Panc1 (cell line): ENCODE measurements at regions of chr5 and their contacts with region 1.

Region 1: DNA sequence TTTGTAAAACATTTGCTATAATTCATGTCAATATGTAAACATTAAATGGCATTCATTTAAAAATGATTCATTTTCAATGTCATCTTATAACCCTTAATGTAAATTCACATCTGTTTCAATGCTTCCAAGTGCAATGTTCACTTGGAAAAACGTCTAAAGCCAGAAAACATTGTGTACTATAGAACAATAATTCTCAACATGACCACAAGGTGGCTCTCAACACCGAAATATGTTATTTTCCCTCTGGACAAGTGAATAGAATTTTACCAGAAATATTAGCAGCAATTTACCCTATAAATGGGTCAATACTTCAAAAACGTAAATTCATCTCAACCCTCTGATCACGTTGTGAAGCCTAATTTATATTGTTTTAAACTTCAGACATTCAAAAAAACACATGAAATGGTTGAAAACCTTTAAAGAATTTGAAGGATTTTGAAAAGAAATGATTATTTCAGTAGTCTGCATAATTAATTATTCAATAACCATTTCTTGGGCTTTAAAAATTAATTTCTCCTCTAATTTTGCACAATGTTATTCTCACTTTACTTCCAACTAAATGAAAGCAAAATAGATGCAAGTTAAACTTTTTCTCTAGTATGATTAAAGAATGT is 11.0 kb downstream of the CDH10 start:
- DNase-seq: peak; percentile 24
- ATAC-seq: no peak
- H3K4me3 ChIP-seq: no peak overlapping the region
- H3K27ac ChIP-seq: no peak overlapping the region
- H3K4me1 ChIP-seq: no peaks in the 10 kb centered on the region; the same call in 1 of the 2 replicates
- H3K27me3 ChIP-seq: no peaks in the 10 kb centered on the region
- CTCF ChIP-seq: peak; percentile 58; the same call in 1 of the 2 replicates

Region 2: DNA sequence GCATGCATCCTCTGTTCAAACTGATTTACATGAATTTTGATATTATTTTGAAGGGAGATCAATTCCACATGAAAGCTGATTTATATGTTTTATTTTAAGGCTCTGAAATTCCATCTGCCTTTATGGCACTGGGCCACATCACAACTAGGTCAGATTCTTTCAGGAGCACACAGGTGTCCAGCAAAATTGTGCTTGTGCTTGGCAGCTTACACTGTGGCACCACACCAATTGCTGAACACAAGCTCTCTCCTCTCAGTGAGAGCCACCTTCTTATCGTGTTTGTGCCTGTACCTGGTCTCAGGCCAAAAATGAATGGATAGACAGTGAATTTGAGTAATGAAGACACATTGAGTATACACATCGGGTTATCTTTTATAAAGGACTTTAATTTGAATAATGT is 189.4 kb before region 1 on chr5:
- CTCF ChIA-PET with region 1: no interaction called
- POLR2A ChIA-PET with region 1: no interaction called
- in situ Hi-C with region 1: no loop called
- intact Hi-C with region 1: loop called (anchors 10 kb)
- DNase-seq: no peak
- ATAC-seq: no peak
- H3K4me3 ChIP-seq: no peak overlapping the region
- H3K27ac ChIP-seq: no peak overlapping the region
- H3K4me1 ChIP-seq: no peaks in the 10 kb centered on the region
- H3K27me3 ChIP-seq: no peaks in the 10 kb centered on the region
- CTCF ChIP-seq: no peak